Calu3 (cell line): ENCODE measurements at regions of chr10 and their contacts with region 1.

Region 1: GRCh38 chr10:29119374-29119773 is 169.5 kb upstream of the LYZL1 start:
- DNase-seq: peak; percentile 66
- H3K4me3 Mint-ChIP-seq: no peak overlapping the region
- H3K27ac Mint-ChIP-seq: no peak overlapping the region
- H3K4me1 Mint-ChIP-seq: peaks cover 19% of the 10 kb centered on the region
- H3K27me3 Mint-ChIP-seq: no peaks in the 10 kb centered on the region
- CTCF ChIP-seq: peak; percentile 44

Region 2: GRCh38 chr10:28788252-28788651 is 331.1 kb before region 1 on chr10:
- CTCF ChIA-PET with region 1: no interaction called
- intact Hi-C with region 1: loop called (anchors 10 kb)
- DNase-seq: no peak
- H3K4me3 Mint-ChIP-seq: no peak overlapping the region
- H3K27ac Mint-ChIP-seq: no peak overlapping the region
- H3K4me1 Mint-ChIP-seq: peaks cover 37% of the 10 kb centered on the region
- H3K27me3 Mint-ChIP-seq: no peaks in the 10 kb centered on the region
- CTCF ChIP-seq: no peak

Region 3: GRCh38 chr10:28910956-28911355 is 208.4 kb before region 1 on chr10:
- CTCF ChIA-PET with region 1: no interaction called
- intact Hi-C with region 1: no loop called
- DNase-seq: no peak
- H3K4me3 Mint-ChIP-seq: no peak overlapping the region
- H3K27ac Mint-ChIP-seq: no peak overlapping the region
- H3K4me1 Mint-ChIP-seq: peaks cover 32% of the 10 kb centered on the region
- H3K27me3 Mint-ChIP-seq: no peaks in the 10 kb centered on the region
- CTCF ChIP-seq: no peak

Region 4: GRCh38 chr10:28997739-28998138 is 121.6 kb before region 1 on chr10:
- CTCF ChIA-PET with region 1: no interaction called
- intact Hi-C with region 1: loop called (anchors 1 kb)
- DNase-seq: no peak
- H3K4me3 Mint-ChIP-seq: no peak overlapping the region
- H3K27ac Mint-ChIP-seq: peak overlapping the region; percentile 20
- H3K4me1 Mint-ChIP-seq: peaks cover 33% of the 10 kb centered on the region
- H3K27me3 Mint-ChIP-seq: no peaks in the 10 kb centered on the region
- CTCF ChIP-seq: no peak